Ovary (tissue), 10 donors: ENCODE measurements at regions of chr6 and their contacts with region 1.

Region 1: DNA sequence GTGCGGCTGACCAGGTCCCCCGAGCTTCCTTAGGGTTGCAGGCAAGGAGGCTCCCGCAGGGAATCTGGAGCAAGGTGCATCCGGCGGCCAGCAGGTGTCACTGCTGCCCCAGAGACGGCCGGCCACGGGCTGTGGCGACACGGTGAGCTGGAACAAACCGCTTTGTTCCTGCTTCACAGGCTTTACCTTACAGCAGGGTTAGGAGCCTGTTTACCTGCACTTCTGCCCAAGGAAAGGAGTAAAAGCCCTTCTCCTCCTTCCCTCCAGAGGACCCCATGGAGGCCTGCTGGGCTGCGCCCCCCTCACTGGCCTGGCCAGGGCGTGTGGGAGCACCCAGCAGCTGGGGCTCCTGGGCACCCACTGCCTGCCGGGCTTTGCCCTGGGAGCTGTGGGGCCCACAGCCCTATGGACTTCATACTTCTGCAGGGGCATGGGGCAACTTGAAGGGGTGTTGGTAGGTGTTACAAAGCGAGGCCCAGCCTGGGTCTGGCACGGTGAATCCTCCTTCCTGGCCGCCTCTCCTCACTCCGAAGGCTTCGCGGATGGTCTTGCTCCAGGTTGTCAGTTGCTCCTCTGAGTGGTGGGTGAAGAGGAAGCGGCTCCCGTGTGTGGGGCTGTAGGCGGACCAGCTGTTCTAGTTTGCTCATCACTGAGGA is 88.4 kb downstream of the CDC5L start:
- DNase-seq: peak; percentile 73 to 88 (median 81)
- H3K4me3 ChIP-seq: no peak overlapping the region
- H3K27ac ChIP-seq: no peak overlapping the region
- H3K4me1 ChIP-seq: peaks cover 9% of the 10 kb centered on the region
- H3K27me3 ChIP-seq: no peaks in the 10 kb centered on the region
- CTCF ChIP-seq: peak; percentile 86 to 92 (median 86)
- EP300 ChIP-seq: no peak
- POLR2A ChIP-seq: no peak

Region 2: GRCh38 chr6:43600595-43600994 is 875.3 kb before region 1 on chr6:
- intact Hi-C with region 1: no loop called
- DNase-seq: no peak
- H3K4me3 ChIP-seq: no peak overlapping the region
- H3K27ac ChIP-seq: no peak overlapping the region
- H3K4me1 ChIP-seq: no peaks in the 10 kb centered on the region
- H3K27me3 ChIP-seq: no peaks in the 10 kb centered on the region
- CTCF ChIP-seq: no peak
- EP300 ChIP-seq: no peak
- POLR2A ChIP-seq: no peak

Region 3: DNA sequence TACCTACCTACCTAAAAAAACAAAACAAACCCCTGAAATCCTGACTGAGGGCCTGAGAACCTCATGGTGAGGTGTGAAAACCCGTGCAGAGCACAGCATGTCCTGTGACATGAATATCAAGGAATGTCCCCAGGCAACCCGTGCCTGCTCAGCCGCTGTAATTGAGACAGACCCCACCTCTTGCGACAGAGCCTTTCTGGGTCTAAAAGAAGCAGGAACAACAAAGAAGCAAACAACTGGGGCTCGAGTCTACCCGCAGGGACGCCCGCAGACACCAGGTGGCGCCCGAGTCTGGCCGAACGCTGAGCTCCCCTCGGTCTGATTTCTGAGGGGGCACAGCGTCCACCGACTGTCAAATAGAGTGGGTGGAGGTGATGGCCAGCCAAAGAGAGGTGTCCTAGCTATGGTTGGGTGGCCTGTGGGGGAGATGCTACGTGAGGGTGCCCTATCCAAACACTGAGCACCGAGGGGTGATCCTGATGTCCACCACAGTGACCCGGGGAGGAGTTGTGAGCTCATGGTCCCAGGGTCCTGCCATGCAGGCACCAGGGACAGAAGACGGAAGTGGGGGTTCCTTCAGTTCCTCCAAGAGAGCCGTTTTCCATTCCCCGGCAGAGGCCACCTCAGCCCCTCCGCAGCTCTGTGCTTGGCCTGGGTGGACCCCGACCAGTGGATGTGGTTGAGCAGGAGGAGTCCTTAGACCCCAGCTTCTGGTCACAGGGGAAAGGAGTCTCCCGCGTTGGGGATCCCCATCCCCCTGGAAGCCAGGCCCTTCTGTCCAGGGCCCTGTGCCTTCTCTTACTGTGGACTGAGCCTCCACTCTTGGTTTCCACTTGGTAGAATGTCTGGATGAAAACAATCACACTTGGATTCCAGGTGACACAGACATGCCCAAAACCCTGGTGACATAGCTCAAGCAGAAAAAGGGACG is 179.8 kb after region 1 on chr6:
- intact Hi-C with region 1: loop called in 3 of 4 experiments (anchors 5 to 10 kb)
- DNase-seq: peak; percentile 58 to 81 (median 71)
- H3K4me3 ChIP-seq: no peak overlapping the region
- H3K27ac ChIP-seq: no peak overlapping the region
- H3K4me1 ChIP-seq: no peaks in the 10 kb centered on the region
- H3K27me3 ChIP-seq: no peaks in the 10 kb centered on the region
- CTCF ChIP-seq: peak; percentile 52 to 77 (median 72)
- EP300 ChIP-seq: no peak
- POLR2A ChIP-seq: no peak

Region 4: GRCh38 chr6:45421709-45422502 is 946.0 kb after region 1 on chr6:
- intact Hi-C with region 1: loop called in 1 of 4 experiments (anchors 5 kb)
- DNase-seq: peak; percentile 39 to 73 (median 60)
- H3K4me3 ChIP-seq: peak overlapping the region; percentile 46
- H3K27ac ChIP-seq: peak overlapping the region in 1 of 2 donors; percentile 33
- H3K4me1 ChIP-seq: peaks cover 3% of the 10 kb centered on the region
- H3K27me3 ChIP-seq: no peaks in the 10 kb centered on the region
- CTCF ChIP-seq: no peak
- EP300 ChIP-seq: no peak
- POLR2A ChIP-seq: no peak

Region 5: DNA sequence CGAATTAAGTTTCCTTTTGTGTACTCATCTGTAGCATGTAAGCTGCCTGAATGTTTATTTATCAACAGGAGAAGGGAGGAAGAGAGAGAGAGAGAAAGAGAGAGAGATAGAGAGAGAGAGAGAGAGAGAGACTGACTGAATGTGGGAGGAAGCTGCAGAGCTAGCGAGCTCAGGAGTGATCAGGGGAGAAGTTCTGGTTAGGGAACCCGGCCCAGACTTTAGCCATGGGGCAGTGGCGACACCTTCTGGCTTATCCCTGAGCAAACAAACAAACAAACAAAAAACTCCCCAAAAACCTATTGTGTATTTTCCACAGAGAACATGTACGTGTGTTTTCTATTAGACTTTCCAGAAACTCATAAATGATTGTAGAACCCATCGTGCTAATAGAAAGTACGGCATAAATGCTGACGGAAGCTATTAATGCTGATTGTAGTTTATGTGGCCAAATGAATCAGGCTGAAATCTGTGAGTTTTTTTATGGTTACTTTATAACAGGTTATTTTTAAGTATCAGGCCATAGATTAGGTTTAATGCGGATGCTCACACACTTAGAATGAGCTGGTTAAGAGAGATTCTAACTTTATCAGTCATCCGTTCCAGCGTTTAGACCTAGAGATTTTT is 1446.9 kb after region 1 on chr6:
- intact Hi-C with region 1: loop called in 2 of 4 experiments (anchors 5 to 10 kb)
- DNase-seq: peak; percentile 39 to 71 (median 60)
- H3K4me3 ChIP-seq: no peak overlapping the region
- H3K27ac ChIP-seq: no peak overlapping the region
- H3K4me1 ChIP-seq: no peaks in the 10 kb centered on the region
- H3K27me3 ChIP-seq: no peaks in the 10 kb centered on the region
- CTCF ChIP-seq: peak; percentile 25 to 42 (median 41)
- EP300 ChIP-seq: no peak
- POLR2A ChIP-seq: no peak